Right ventricle myocardium inferior (tissue), 1 donor: ENCODE measurements at regions of chr11 and their contacts with region 1.

Region 1: DNA sequence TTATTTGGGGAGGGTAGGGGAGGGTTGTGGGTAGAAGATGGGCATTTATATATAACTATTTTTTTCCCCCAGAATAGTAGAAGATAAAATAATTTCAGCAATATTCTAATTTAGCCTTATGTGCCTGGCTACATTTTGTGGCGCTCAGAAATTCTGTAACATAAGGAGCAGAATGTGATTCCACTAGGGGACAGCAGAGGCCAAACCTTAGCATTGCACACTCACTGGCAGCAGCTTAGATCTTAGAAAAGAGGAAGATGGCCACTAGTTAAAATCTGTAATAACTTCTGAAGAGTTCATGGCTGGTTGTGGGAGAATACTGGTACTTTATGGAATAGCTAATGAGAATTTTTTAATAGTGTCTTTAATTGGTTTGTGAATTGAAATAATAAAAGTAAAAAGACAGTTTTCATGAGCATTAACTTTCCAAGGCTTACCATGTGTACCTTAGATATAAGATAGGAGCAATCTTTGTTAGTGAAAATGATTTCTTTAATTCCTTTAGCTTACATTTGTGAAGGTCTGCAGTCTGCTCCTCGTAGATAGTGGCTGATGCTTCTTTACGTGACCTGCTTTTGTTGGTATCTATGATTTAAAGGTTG is 33.1 kb downstream of the DDX10 start:
- DNase-seq: no peak
- ATAC-seq: peak; percentile 83

Region 2: DNA sequence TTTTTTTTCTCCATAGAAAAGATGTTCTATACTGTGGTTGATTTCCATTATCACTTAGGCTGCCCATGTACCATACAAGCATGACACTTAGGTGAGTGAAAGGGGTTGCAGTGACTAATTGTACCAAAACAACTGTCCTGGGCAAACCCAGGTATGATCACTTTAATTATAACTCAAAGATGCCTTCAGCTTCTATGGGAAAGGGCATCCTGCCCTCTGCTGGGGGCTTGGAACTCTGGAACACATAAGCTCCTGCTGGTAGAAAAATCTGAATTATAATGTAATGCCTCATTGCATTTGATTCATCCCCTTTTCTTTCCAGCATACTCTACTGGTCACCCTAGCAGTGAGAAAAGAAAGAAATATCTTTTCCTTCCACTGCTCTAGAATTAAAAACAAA is 173.2 kb after region 1 on chr11:
- intact Hi-C with region 1: loop called (anchors 5 kb)
- DNase-seq: peak; percentile 68
- ATAC-seq: no peak

Region 3: DNA sequence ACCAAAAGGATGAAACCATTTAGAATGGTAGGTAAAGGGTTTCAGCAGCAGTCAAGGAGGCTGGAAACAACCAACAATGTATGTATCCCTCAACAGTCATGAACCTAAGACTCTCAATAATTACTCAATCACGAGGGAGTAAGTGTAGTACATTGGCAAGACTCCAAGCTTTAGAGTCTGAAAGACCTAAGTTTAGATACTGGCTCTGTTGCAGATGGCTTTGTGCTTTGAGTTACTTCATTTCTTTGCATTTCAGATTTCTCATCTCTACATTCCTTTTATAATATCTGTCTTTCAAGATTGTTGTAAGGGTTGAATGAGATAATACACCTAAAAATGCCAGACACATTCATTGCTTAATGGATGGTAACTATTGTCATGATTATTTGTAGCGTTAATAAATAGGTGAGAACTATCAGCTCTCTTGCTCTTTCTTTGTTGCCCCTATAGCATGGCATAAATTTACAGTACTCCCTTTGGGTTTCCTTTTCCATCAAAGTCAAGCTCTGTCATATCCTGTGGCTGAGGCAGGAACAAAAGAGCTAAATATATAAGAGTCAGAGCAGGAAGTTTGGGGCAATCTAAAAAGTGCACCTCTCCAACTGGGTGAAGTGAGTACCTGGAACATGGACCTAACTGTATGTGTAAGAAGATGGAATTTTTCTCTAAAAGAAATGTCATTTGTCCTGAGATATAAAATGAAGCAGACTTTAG is 1167.0 kb after region 1 on chr11:
- intact Hi-C with region 1: loop called (anchors 5 kb)
- DNase-seq: no peak
- ATAC-seq: no peak

Region 4: GRCh38 chr11:109939166-109939810 is 1241.3 kb after region 1 on chr11:
- intact Hi-C with region 1: loop called (anchors 2 kb)
- DNase-seq: no peak
- ATAC-seq: peak; percentile 71